OCI-LY7 (cell line): ENCODE measurements at regions of chr6 and their contacts with region 1.

Region 1: DNA sequence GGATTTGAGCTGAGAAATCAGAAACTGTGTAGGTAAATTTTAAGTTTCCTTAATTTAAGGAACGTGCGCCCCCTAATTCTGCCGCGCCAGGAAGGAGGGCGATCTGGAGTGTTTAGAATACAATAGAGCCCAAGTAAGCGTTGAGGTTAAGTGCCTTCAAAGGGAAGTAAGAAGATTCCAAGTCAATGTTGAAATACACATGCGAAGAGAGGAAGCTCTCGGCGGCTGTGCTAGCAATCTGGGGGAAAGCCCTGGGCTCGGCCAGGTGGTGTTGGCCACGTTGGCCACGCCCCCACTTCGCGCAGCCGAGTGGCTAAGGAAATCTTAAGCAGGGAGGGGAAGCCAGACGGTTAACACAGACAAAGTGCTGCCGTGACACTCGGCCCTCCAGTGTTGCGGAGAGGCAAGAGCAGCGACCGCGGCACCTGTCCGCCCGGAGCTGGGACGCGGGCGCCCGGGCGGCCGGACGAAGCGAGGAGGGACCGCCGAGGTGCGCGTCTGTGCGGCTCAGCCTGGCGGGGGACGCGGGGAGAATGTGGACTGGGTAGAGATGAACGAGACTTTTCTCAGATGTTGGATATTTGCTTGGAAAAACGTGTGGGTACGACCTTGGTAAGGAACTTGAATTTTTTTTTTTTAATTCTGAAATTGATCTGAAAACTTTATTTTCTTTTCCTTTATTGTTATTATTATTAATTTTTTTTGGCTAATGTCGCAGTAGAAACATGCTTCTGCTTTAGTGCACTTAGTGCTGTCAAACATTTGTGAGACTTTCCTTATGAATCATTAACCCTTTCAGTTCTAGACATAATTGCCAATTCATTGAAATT is at the start of gene PRDM1:
- DNase-seq: peak; percentile 98
- H3K4me3 ChIP-seq: peak within 1 kb of the TSS; percentile 63
- H3K27ac ChIP-seq: peak within 1 kb of the TSS; percentile 87
- H3K4me1 ChIP-seq: peaks cover 73% of the 10 kb centered on the region
- CTCF ChIP-seq: peak; percentile 69
- total RNA-seq, gene PRDM1: 1.5 and 2.2 TPM in 2 replicates

Region 2: GRCh38 chr6:105431226-105431625 is 655.0 kb before region 1 on chr6:
- CTCF ChIA-PET with region 1: interaction called, 3 read pairs
- POLR2A ChIA-PET with region 1: no interaction called
- intact Hi-C with region 1: loop called (anchors 2 kb)
- DNase-seq: peak; percentile 58
- H3K4me3 ChIP-seq: no peak overlapping the region
- H3K27ac ChIP-seq: no peak overlapping the region
- H3K4me1 ChIP-seq: no peaks in the 10 kb centered on the region
- CTCF ChIP-seq: peak; percentile 87

Region 3: DNA sequence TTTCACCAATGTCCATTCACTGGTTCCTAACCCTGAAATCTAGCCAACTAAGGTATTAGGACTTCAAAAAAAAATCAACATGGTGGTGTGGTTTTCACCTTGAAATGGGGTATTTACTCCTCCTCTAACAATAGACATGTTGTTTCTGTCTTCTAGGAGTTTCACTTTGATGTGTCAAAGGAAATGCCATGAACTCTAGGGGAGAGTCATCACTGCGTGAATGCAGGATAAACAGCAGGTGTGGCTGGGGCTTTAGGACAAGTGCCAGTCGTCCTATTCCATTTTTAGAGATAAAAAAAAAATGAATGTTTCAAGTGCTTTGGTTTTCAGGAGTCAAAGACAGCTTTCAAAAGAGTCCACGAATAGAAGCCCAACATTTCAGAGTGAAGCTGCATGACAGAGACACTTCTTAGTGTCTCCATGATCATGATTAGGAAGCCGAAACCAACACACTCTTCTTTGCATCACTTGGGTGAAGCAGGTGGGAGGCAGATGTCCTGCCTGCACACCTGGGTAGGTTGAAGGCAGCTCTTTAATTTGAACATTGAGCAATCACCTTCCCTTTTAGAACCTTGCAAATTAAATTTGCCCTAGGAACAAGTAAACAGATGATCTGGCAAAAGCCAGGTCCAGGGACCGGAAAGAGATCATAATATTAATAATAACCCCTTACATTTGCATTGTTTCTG is 328.5 kb before region 1 on chr6:
- CTCF ChIA-PET with region 1: no interaction called
- POLR2A ChIA-PET with region 1: interaction called, 5 read pairs
- intact Hi-C with region 1: loop called (anchors 1 kb)
- DNase-seq: peak; percentile 90
- H3K4me3 ChIP-seq: peak overlapping the region; percentile 47
- H3K27ac ChIP-seq: peak overlapping the region; percentile 84
- H3K4me1 ChIP-seq: peaks cover 50% of the 10 kb centered on the region
- CTCF ChIP-seq: no peak

Region 4: DNA sequence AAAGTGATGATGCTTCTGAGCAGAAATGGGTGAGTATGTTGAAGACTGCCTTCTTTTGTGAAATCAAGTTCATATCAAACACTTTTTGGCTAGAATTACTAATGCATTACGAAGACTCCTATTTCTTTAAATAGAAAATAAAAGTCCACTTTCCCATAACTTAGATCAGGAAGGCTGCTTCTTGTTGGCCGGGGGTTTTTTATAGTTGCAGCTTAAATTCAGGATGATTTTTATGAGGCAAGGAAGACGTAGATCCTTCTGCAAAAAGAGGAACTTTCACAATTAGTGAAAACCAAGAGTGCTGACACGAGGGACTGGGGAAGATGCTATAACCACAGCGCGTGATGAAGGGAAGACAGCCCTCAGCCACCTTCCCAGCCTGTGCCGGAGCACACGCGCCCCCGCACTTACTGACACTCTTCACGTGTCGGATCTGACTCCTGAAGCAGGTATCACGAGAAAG is 206.1 kb before region 1 on chr6:
- CTCF ChIA-PET with region 1: no interaction called
- POLR2A ChIA-PET with region 1: interaction called, 3 read pairs
- intact Hi-C with region 1: loop called (anchors 5 kb)
- DNase-seq: peak; percentile 63
- H3K4me3 ChIP-seq: peak overlapping the region; percentile 43
- H3K27ac ChIP-seq: peak overlapping the region; percentile 21
- H3K4me1 ChIP-seq: peaks cover 92% of the 10 kb centered on the region
- CTCF ChIP-seq: no peak

Region 5: GRCh38 chr6:106141441-106142237 is 55.4 kb after region 1 on chr6:
- CTCF ChIA-PET with region 1: interaction called, 3 read pairs
- POLR2A ChIA-PET with region 1: interaction called, 6 read pairs
- intact Hi-C with region 1: loop called (anchors 2 kb)
- DNase-seq: peak; percentile 73
- H3K4me3 ChIP-seq: peak overlapping the region; percentile 11
- H3K27ac ChIP-seq: peak overlapping the region; percentile 85
- H3K4me1 ChIP-seq: peaks cover 51% of the 10 kb centered on the region
- CTCF ChIP-seq: no peak

Region 6: GRCh38 chr6:106300944-106301343 is 214.7 kb after region 1 on chr6:
- CTCF ChIA-PET with region 1: interaction called, 4 read pairs
- POLR2A ChIA-PET with region 1: interaction called, 4 read pairs
- intact Hi-C with region 1: loop called (anchors 1 kb)
- DNase-seq: peak; percentile 41
- H3K4me3 ChIP-seq: no peak overlapping the region
- H3K27ac ChIP-seq: no peak overlapping the region
- H3K4me1 ChIP-seq: no peaks in the 10 kb centered on the region
- CTCF ChIP-seq: peak; percentile 82